Psoas muscle (tissue), 8 donors: ENCODE measurements at regions of chr11 and their contacts with region 1.

Region 1: DNA sequence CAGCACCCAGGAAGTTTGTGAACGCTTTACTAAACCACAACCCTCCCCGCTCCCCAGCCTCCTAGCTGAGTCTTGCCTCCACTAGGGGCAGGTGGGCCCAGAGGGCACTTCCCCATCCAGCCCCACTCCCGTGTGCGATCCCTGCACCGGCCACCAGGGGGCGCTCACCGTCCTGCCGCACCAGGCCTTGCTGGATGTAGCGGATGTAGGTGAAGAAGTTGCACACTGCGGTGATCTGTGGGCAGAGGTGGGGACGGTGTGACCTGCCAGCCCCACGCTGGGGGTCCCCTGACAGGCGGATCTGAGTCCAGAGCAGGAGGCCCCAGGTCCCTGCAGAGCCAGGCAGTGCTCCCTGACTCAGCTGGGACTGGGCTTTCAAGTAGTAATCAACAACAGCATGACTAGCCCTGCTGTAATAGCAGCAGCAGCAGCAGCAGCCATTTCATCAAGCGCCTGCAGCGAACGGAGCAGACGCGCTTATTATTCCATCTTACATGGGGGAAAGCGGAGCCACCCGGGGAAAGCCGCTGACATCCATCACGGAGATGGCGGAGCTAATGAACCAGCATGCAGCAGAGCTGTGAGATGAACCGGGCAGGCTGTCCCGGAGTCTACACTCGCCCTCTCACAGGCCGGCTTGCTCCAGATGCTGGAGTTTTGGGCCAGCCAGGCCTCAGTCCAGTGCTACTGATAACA is 7.9 kb upstream of the FADS3 start:
- DNase-seq: peak; percentile 83 to 93
- ATAC-seq: peak; percentile 86 to 93 (median 90)
- H3K4me3 ChIP-seq: no peak overlapping the region
- H3K27ac ChIP-seq: no peak overlapping the region
- H3K4me1 ChIP-seq: no peaks in the 10 kb centered on the region
- H3K27me3 ChIP-seq: no peaks in the 10 kb centered on the region
- CTCF ChIP-seq: peak; percentile 100

Region 2: GRCh38 chr11:61947486-61948210 is 48.4 kb after region 1 on chr11:
- intact Hi-C with region 1: loop called (anchors 1 to 2 kb)
- DNase-seq: peak; percentile 87 to 92
- ATAC-seq: peak; percentile 82 to 88 (median 86)
- H3K4me3 ChIP-seq: no peak overlapping the region
- H3K27ac ChIP-seq: no peak overlapping the region
- H3K4me1 ChIP-seq: no peaks in the 10 kb centered on the region
- H3K27me3 ChIP-seq: no peaks in the 10 kb centered on the region
- CTCF ChIP-seq: peak; percentile 92

Region 3: DNA sequence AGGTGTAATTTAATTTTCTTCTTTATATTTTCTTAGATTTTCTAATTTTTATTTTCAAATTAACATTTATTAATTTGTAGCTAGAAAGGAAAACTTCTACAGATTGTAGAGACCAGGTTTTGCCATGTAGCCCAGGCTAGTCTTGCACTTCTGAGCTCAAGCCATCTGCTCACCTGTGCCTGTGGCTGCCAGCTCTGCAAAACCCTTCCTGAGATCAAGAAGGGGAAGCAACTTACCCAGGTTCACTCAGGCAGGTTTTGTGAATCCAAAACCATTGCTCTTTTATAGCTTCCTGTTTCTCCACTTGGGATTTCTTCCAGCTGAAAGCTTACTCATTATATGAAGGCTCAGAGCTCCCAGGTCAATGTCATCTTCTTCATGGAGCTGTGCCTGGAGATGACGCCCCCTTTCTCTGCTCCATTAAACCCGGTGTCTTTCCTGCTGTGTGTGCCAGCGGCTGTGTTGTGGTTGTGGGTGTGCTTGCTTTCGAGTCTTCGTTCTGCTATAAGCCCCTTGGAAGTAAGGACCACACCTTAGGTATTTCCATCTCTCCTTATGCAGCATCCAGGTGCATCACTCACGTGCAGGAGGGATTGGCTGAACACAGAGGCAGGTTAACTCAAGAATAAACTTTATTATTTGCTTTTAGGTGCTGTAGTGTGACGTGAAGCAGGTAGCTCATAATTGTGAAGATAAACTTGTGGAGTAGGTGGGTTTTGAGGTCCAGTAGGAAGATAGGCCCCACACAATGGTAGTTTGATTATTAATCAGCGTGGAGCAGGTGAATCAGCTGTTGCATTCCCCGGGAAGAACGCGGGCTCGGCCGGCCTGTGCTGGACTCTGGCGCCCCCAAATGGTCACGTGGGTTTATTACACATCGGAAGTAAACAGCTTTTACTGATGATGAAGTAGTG is 182.3 kb after region 1 on chr11:
- intact Hi-C with region 1: loop called (anchors 1 to 2 kb)
- DNase-seq: peak; percentile 75 to 83
- ATAC-seq: peak; percentile 82 to 93 (median 89)
- H3K4me3 ChIP-seq: no peak overlapping the region
- H3K27ac ChIP-seq: no peak overlapping the region
- H3K4me1 ChIP-seq: peaks cover 3% of the 10 kb centered on the region
- H3K27me3 ChIP-seq: no peaks in the 10 kb centered on the region
- CTCF ChIP-seq: peak; percentile 90

Region 4: DNA sequence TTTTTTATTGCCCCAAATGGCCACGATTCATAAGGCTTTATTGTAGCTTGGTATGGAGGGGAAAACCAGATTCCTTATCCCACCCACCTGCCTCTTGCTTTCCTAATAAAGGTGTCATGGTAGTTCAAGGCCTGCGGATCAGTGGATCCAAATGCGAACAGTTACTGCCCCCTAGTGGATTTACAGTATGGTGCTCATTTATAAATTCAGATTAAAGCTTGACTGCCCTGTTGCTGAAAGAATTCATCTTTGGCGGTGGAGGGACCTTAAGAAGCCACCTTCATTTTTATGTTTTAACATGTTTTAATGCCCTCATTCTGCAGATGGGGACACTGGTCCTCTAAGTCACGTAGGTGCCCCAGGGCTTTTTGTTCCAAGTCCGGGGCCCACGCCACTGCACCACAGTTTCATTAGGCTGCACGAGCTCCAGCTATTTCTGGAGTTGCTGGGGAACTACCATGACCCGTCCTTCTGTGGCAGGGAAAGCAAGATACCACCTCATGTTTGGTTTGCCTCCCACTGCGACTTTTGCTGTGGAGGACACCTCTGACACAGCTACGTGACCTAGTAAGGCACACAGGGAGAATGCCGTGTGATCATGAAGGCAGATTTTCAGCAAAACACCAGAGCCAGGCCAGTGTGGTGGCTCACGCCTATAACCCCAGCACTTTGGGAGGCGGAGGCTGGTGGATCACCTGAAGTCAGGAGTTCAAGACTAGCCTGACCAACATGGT is 208.9 kb after region 1 on chr11:
- intact Hi-C with region 1: loop called (anchors 2 to 5 kb)
- DNase-seq: no peak
- ATAC-seq: peak; percentile 46 to 66 (median 56)
- H3K4me3 ChIP-seq: no peak overlapping the region
- H3K27ac ChIP-seq: no peak overlapping the region
- H3K4me1 ChIP-seq: peaks cover 27% of the 10 kb centered on the region
- H3K27me3 ChIP-seq: no peaks in the 10 kb centered on the region
- CTCF ChIP-seq: peak; percentile 82